ENCODE measurements at regions of chr10 and their contacts with region 1.

Region 1: GRCh38 chr10:13787015-13787421 is 200.3 kb downstream of the PRPF18 start:
- DNase-seq: no peak
- ATAC-seq: peak; percentile 9 to 24

Region 2: GRCh38 chr10:13690281-13690825 is 96.7 kb before region 1 on chr10:
- intact Hi-C with region 1: no loop called
- DNase-seq: no peak
- ATAC-seq: no peak

Region 3: DNA sequence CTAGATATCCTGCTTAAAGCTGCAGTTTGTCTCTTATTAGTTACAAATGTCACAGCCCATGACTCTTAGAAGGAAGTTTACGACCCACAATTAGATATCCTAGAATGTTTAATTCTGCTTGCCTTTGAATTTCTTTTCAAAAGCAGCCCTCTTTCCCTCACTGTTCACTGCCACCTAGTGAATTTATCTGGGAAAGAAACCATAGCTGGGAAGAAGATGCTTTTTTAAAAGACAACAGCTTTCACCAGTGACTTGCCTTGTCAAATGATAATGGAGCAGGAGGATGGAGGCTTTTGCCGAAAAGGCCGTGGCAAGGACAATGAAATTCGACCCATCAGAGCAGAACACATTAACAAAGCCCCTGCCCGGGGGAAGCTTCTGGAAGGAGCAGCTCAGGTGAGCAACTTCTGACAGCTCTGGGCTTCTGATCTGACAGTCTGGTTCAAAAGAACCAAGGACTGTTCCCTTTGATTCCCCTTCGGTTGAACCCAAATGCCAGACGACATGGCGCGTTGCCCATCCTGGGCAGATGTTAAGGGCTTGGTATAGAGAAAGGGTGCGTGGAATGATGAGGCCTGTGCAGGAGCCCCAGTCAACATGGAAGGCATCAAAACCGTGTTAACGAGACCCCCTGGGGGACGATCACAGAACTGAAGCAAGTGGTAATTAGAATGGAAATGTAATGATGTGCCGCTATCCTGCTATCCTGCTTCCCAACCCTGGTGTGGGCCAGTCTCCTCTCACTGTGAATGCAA is 306.9 kb after region 1 on chr10:
- intact Hi-C with region 1: loop called (anchors 1 to 5 kb)
- DNase-seq: no peak
- ATAC-seq: peak; percentile 34 to 64

Measured in left cardiac atrium (tissue), 4 donors.